GM10248 (cell line): ENCODE measurements at regions of chr11 and their contacts with region 1.

Region 1: GRCh38 chr11:70481625-70482528 is 83.5 kb downstream of the CTTN start:
- DNase-seq: no peak
- CTCF ChIP-seq: no peak

Region 2: DNA sequence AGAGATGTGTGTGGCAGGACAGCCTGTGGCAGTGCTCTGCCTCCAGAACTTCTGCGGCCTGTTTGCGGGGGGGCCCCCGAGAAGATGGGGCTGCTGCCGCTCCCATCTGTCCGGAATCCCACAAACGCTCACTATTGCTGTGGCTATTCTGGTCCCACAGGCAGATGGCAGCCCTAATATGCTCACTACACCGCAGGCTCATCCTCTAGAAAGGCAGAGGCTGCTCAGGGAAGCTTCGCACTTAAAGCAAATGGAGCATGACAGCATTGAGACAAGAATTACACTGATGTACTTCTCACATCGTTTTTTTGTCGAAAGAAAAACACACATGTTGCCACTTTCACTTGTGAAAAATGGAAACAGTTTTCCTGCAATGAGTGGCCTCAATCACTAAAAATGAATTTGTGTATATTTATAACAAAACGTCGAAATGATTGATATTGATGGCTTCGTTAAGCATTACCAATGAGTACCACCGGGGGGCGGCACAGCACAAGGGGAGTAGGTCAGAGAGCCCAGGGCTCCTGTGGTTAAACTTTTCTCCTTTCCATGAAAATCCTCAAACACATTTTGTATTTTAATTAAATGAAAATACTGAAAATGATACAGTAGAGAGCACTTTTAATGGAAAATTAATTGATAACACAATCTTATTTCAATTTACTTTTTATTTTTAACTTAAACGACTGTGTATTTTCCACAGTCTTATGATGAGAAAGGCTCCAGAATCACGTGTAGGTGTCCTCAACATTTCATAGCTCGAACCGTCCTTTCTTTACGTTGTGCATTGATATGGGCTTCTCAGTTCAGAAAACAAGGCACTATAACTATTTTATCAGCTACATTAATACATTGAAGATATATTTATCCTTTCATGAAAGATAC is 14.4 kb before region 1 on chr11:
- CTCF ChIA-PET with region 1: interaction called, 15 read pairs
- POLR2A ChIA-PET with region 1: no interaction called
- DNase-seq: peak; percentile 60
- CTCF ChIP-seq: peak; percentile 76